ENCODE measurements at regions of chr17 and their contacts with region 1.

Region 1: DNA sequence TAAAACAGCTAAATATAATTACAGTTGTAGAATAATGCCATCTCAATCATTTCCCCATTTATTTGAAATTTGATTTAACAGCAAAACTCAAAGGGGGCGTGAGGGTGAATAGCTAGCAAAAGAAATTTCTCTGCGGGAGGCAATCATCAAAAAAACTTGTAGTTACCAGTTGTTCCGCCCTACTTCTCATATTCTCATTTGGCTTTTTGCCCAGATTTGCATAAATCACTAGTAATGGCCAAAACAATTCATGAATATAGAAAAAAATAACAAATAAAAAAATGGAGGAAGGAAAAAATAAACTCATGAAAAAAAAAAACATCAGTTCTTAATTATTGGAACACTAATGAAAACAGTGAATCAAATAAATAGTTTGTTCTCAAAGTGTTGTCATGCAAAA is 722.6 kb upstream of the KIF2B start:
- DNase-seq: no peak
- ATAC-seq: no peak

Region 2: GRCh38 chr17:52721910-52722309 is 378.2 kb before region 1 on chr17:
- intact Hi-C with region 1: no loop called
- DNase-seq: no peak
- ATAC-seq: no peak

Region 3: DNA sequence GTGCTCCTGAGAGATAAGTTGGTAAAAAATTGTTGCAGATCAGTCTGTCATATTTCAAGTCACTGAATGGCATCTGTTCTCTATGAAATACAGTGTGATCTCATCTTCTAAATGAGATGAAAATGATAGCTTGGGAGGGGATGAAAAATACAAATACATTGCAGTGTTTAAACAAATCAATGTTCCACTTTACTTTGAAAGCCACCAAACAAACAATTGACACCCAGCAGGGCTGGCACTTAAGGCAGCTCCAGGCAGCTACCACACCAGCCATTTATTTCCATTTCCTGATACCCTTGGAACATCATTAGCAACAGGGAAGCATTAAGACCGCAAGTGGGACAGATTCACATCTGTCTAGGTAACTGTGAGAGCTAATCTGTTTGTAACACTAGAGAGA is 105.0 kb before region 1 on chr17:
- intact Hi-C with region 1: no loop called
- DNase-seq: no peak
- ATAC-seq: no peak

Region 4: GRCh38 chr17:53039981-53040380 is 60.1 kb before region 1 on chr17:
- intact Hi-C with region 1: loop called in 1 of 2 experiments (anchors 10 kb)
- DNase-seq: no peak
- ATAC-seq: no peak

Region 5: GRCh38 chr17:53166731-53167130 is 66.6 kb after region 1 on chr17:
- intact Hi-C with region 1: no loop called
- DNase-seq: no peak
- ATAC-seq: no peak

Measured in left colon (tissue), 2 donors.